H1 (cell line): ENCODE measurements at regions of chr15 and their contacts with region 1.

Region 1: GRCh38 chr15:40952901-40953712 is at the start of gene CHAC1:
- DNase-seq: peak; percentile 96 to 97
- H3K4me3 ChIP-seq: peak within 1 kb of the TSS; percentile 74 to 92 (median 82)
- H3K27ac ChIP-seq: peak within 1 kb of the TSS; percentile 97
- H3K4me1 ChIP-seq: peaks cover 2 to 20% (median 12%) of the 10 kb centered on the region in 4 experiments
- H3K27me3 ChIP-seq: no peaks in the 10 kb centered on the region
- CTCF ChIP-seq: peak in 1 of 3 experiments; percentile 0; a peak in 1 of 4 replicates
- EP300 ChIP-seq: peak in 1 of 2 experiments; percentile 50; a peak in 1 of 3 replicates
- POLR2A ChIP-seq: peak; percentile 76 to 85
- RAD21 ChIP-seq: peak in 1 of 2 experiments; percentile 10; a peak in 1 of 4 replicates
- total RNA-seq, gene CHAC1: 28.7 and 34.3 TPM in 2 replicates

Region 2: GRCh38 chr15:40536501-40536900 is 416.6 kb before region 1 on chr15:
- CTCF ChIA-PET with region 1: no interaction called
- POLR2A ChIA-PET with region 1: no interaction called
- DNase-seq: no peak
- H3K4me3 ChIP-seq: no peak overlapping the region
- H3K27ac ChIP-seq: no peak overlapping the region
- H3K4me1 ChIP-seq: no peaks in the 10 kb centered on the region
- H3K27me3 ChIP-seq: no peaks in the 10 kb centered on the region
- CTCF ChIP-seq: no peak
- EP300 ChIP-seq: no peak
- POLR2A ChIP-seq: no peak
- RAD21 ChIP-seq: no peak

Region 3: DNA sequence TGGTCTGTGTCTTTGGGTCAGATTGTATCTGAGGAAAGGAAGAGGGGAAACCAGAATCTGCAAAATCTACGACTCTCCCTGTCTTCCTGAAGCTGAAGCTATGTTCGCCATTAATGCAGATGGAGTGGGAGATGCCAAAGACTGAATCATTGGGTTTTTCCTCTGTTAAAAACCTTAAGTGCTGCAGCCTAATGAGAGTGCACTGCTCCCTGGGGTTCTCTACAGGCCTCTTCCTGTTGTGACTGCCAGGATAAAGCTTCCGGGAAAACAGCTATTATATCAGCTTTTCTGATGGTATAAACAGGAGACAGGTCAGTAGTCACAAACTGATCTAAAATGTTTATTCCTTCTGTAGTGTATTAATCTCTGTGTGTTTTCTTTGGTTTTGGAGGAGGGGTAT is 222.1 kb before region 1 on chr15:
- CTCF ChIA-PET with region 1: no interaction called
- POLR2A ChIA-PET with region 1: no interaction called
- DNase-seq: no peak
- H3K4me3 ChIP-seq: no peak overlapping the region
- H3K27ac ChIP-seq: no peak overlapping the region
- H3K4me1 ChIP-seq: no peaks in the 10 kb centered on the region
- H3K27me3 ChIP-seq: no peaks in the 10 kb centered on the region
- CTCF ChIP-seq: no peak
- EP300 ChIP-seq: no peak
- POLR2A ChIP-seq: no peak
- RAD21 ChIP-seq: no peak

Region 4: DNA sequence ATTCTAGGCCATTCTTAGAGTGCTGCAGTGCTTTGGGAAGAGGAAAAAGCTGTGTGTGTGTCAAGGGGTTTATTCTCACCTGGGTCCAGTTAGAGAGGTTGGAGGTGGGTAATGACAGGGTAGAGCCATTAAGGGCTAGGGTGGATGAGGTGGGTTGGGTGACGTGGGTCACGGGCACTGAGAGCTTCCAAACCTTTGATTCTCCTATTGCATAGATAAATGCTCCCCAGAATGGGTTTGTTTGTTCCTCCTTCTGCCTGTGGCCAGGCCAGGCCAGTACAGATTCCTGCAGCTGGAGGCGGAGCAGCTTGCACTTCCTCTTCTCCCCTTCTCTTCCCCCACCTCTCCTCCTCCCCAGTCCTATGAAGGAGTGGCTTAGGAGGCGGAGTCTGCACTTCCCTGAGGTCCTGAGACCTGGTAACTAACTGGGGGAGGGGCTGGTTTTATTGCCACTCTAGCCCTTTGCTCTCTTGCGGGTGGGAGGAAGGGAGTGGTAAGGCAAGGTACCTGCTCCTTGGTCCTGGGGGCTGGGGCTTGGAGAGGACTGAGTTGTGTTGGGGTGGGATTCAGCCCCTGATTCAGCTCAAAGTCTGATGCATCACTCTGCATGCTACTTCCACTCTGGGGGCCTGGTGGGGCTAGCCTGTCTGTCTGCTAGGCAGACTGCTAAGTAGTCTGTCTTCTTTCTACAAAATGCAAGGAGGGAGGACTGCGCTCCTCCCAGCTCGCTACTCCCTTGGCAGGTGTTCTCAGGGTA is 105.7 kb before region 1 on chr15:
- CTCF ChIA-PET with region 1: no interaction called
- POLR2A ChIA-PET with region 1: interaction called, 10 read pairs
- DNase-seq: no peak
- H3K4me3 ChIP-seq: peak overlapping the region in 1 of 4 experiments; percentile 84; a peak in 2 of 8 replicates
- H3K27ac ChIP-seq: no peak overlapping the region
- H3K4me1 ChIP-seq: peaks cover 0 to 26% (median 15%) of the 10 kb centered on the region in 4 experiments; a peak in 6 of 7 replicates
- H3K27me3 ChIP-seq: peaks cover 0 to 2% (median 0%) of the 10 kb centered on the region in 4 experiments; a peak in 1 of 7 replicates
- CTCF ChIP-seq: no peak
- EP300 ChIP-seq: no peak
- POLR2A ChIP-seq: no peak
- RAD21 ChIP-seq: no peak

Region 5: DNA sequence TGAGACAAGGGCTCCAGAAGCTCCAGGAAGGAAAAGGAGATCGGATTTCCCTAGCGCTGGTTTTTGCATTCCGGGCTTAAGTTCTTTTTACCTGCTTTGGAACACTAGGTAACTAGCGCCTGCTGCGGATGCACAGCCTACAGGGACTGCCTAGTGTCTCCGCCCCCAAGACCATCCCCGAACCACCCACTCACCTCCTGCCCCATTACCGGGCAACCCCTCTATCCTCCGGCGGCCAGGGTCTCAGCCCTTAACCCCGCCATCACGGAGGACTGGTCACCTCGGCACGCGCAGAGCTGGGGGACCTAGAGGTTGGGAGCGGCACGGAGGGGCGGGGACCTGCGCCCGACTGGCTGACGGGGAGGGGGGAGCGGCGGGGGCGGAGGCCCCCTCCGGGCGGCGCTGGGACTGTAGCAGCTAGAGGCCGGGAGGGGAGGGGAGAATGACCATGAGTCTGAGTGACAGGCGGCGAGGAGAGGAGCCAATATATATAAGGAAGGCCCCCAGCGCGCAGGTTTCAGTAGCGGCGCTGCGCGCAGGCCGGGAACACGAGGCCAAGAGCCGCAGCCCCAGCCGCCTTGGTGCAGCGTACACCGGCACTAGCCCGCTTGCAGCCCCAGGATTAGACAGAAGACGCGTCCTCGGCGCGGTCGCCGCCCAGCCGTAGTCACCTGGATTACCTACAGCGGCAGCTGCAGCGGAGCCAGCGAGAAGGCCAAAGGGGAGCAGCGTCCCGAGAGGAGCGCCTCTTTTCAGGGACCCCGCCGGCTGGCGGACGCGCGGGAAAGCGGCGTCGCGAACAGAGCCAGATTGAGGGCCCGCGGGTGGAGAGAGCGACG is 24.1 kb before region 1 on chr15 and contains the start of gene DLL4:
- CTCF ChIA-PET with region 1: interaction called, 590 read pairs
- POLR2A ChIA-PET with region 1: interaction called, 1,505 read pairs
- DNase-seq: peak in 1 of 2 experiments; percentile 87
- H3K4me3 ChIP-seq: peak within 1 kb of the TSS; percentile 31 to 71 (median 46)
- H3K27ac ChIP-seq: no peak within 1 kb of the TSS
- H3K4me1 ChIP-seq: peaks cover 3 to 36% (median 21%) of the 10 kb centered on the region in 4 experiments
- H3K27me3 ChIP-seq: peaks cover 69 to 94% (median 90%) of the 10 kb centered on the region in 4 experiments
- CTCF ChIP-seq: no peak
- EP300 ChIP-seq: no peak
- POLR2A ChIP-seq: peak in 1 of 2 experiments; percentile 69; a peak in 2 of 3 replicates
- RAD21 ChIP-seq: no peak
- total RNA-seq, gene DLL4: 0.48 and 0.60 TPM in 2 replicates

Region 6: GRCh38 chr15:40968290-40969085 is 15.4 kb after region 1 on chr15:
- CTCF ChIA-PET with region 1: interaction called, 14 read pairs
- POLR2A ChIA-PET with region 1: interaction called, 1,505 read pairs
- DNase-seq: no peak
- H3K4me3 ChIP-seq: no peak overlapping the region
- H3K27ac ChIP-seq: no peak overlapping the region
- H3K4me1 ChIP-seq: peaks cover 0 to 7% (median 4%) of the 10 kb centered on the region in 4 experiments; a peak in 3 of 7 replicates
- H3K27me3 ChIP-seq: no peaks in the 10 kb centered on the region
- CTCF ChIP-seq: no peak
- EP300 ChIP-seq: no peak
- POLR2A ChIP-seq: no peak
- RAD21 ChIP-seq: no peak

Region 7: GRCh38 chr15:41116116-41116871 is 163.2 kb after region 1 on chr15 and contains the start of gene INO80:
- CTCF ChIA-PET with region 1: no interaction called
- POLR2A ChIA-PET with region 1: interaction called, 16 read pairs
- DNase-seq: peak; percentile 90 to 97
- H3K4me3 ChIP-seq: peak within 1 kb of the TSS; percentile 68 to 96 (median 86)
- H3K27ac ChIP-seq: peak within 1 kb of the TSS; percentile 100
- H3K4me1 ChIP-seq: peaks cover 0 to 3% (median 0%) of the 10 kb centered on the region in 4 experiments; a peak in 2 of 7 replicates
- H3K27me3 ChIP-seq: no peaks in the 10 kb centered on the region
- CTCF ChIP-seq: no peak
- EP300 ChIP-seq: peak in 1 of 2 experiments; percentile 25; a peak in 1 of 3 replicates
- POLR2A ChIP-seq: peak; percentile 85 to 95
- RAD21 ChIP-seq: 0 out of 4 replicates have a peak, but pooled peaks of 1 of the 2 experiments have one; percentile 4
- total RNA-seq, gene INO80: 22.1 and 24.5 TPM in 2 replicates